ENCODE measurements at regions of chr15 and their contacts with region 1.

Region 1: DNA sequence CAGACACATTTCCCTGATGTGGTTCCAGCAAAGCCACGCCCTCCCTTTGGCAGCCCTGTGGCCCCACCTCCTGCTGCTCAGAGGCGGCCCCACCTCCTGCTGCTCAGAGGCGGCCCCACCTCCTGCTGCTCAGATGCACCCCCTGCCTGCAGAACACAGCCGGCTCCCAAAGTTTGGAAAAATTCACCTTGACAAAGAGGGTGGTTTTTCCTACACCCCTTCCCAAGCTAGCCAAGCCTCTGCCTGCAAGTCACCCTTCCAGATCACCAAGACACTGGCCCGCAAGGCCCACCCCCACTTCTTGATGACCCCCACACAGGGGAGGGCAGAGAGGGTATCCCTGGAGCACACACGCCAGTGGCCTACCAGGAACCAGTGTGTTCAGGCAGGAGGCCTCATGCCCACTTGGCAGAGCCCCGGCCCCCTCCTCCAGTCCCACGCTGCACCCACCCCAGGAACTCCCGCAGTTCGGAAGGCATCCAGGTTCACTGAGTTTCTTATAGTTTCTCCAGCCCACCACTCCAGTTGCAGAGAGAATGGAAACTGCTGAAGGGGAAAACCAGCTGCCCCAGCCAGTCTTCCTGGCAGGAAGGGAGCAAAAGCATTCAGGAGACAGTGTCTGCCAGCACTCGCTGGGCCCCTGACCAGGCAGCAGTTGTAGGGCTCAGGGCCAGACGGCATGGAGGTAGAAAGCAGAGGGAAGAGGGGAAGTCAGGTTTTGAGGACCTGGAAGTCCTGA is 2.3 kb upstream of the HAPLN3 start:
- DNase-seq: peak; percentile 78
- H3K4me3 Mint-ChIP-seq: no peak overlapping the region
- H3K27ac Mint-ChIP-seq: no peak overlapping the region
- H3K4me1 Mint-ChIP-seq: peaks cover 35% of the 10 kb centered on the region
- H3K27me3 Mint-ChIP-seq: no peaks in the 10 kb centered on the region

Region 2: DNA sequence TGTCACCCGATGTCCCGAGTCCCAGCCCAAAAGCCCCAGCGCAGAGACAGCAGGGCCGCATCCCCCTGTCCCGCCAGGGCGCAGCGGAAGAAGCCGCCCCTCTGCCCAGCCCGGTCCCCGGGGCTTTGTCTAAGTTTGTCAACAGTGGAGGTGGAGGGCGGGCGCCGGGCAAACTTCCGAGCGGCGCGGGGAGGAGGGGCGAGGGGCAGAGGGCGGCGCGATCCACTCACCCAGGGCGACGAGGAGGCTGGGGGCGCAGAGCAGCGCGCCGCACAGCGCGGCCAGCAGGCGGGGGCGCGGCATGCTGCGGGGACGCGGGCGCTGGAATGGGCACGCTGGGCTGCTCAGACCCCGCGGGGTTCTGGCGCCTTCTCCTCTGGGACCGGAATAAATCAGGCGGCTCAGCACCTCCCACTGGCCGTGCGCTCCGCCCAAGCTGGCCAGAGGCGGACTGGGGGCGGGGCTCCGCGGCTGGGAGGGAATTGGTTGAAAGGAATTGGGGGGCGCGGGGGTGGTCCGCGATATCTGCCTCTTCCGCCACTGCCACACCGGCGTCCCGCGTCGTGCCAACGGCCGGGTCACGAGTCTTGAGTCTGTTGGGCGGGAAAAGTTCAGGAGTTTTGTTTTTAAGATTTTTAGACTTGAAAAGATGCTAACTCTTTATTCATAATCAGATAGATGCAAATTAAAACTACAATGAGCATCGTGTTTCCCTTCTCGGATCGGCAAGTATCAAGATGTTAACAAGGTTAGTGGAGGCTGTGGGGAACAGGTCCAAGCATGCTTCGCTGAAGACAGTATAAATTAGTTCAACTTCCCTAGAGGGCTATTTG is 15.6 kb after region 1 on chr15 and contains the start of gene MFGE8:
- intact Hi-C with region 1: loop called (anchors 1 kb)
- DNase-seq: peak; percentile 71
- H3K4me3 Mint-ChIP-seq: peak within 1 kb of the TSS; percentile 93
- H3K27ac Mint-ChIP-seq: peak within 1 kb of the TSS; percentile 77
- H3K4me1 Mint-ChIP-seq: peaks cover 28% of the 10 kb centered on the region
- H3K27me3 Mint-ChIP-seq: peaks cover 12% of the 10 kb centered on the region
- total RNA-seq, gene MFGE8: 7.9 and 10.6 TPM in 2 replicates

Region 3: GRCh38 chr15:89017370-89018066 is 119.9 kb after region 1 on chr15:
- intact Hi-C with region 1: loop called (anchors 1 kb)
- DNase-seq: peak; percentile 70
- H3K4me3 Mint-ChIP-seq: peak overlapping the region; percentile 61
- H3K27ac Mint-ChIP-seq: peak overlapping the region; percentile 61
- H3K4me1 Mint-ChIP-seq: peaks cover 27% of the 10 kb centered on the region
- H3K27me3 Mint-ChIP-seq: peaks cover 32% of the 10 kb centered on the region

Measured in activated T-helper 1 cell treated with anti-CD3 and anti-CD28 coated beads, Interleukin-12 subunit alpha, Interleukin-12 subunit beta, Interleukin-2, Interleukin-4 antibody, amounts not matched to agents 30 ng/mL and 10 ng/mL and 1 ng/mL, durations not matched to agents 14 hours and 24 hours and 36 hours (primary cell).